ENCODE measurements at regions of chr1 and their contacts with region 1.

Region 1: DNA sequence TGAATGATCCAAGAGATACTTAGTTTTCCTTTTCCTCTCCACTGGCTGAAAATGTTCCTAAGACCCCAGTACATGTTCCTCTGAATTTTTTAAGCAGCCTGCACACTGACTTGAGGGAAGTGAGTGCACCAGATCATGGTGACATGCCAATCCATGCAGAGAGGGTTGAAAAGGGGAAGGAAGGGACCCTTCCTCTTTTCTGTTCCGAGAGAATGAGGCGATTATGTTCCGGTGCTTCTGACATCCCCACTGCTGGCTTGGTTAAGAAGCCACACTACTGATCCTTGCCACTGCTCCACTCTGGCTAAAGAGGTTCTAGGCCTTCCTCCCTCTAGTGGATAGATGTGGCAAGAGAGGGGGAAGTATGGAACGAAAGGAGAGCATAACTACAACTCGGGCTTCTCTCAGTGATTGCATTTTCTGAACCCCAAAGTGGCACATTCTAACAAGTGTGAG is 1.8 kb upstream of the CYB5R1 start:
- DNase-seq: peak; percentile 90
- ATAC-seq: peak; percentile 62
- H3K4me3 ChIP-seq: peak overlapping the region in 4 of 5 experiments; percentile 8 to 69 (median 50)
- H3K4me3 Mint-ChIP-seq: peak overlapping the region; percentile 97
- H3K27ac ChIP-seq: peak overlapping the region; percentile 73 to 75
- H3K27ac Mint-ChIP-seq: peak overlapping the region; percentile 95
- H3K4me1 ChIP-seq: peaks cover 28 to 38% of the 10 kb centered on the region in 2 donors
- H3K4me1 Mint-ChIP-seq: peaks cover 39% of the 10 kb centered on the region
- H3K27me3 ChIP-seq: no peaks in the 10 kb centered on the region
- H3K27me3 Mint-ChIP-seq: no peaks in the 10 kb centered on the region
- CTCF ChIP-seq: peak; percentile 74

Region 2: GRCh38 chr1:202810615-202811295 is 158.1 kb before region 1 on chr1 and contains the start of gene PCAT6:
- CTCF ChIA-PET with region 1: no interaction called
- POLR2A ChIA-PET with region 1: interaction called, 3 read pairs
- intact Hi-C with region 1: loop called (anchors 1 kb)
- DNase-seq: peak; percentile 93
- ATAC-seq: peak; percentile 81
- H3K4me3 ChIP-seq: peak within 1 kb of the TSS; percentile 72 to 91 (median 86)
- H3K4me3 Mint-ChIP-seq: peak within 1 kb of the TSS; percentile 87
- H3K27ac ChIP-seq: peak within 1 kb of the TSS; percentile 35 to 69
- H3K27ac Mint-ChIP-seq: peak within 1 kb of the TSS; percentile 91
- H3K4me1 ChIP-seq: peaks cover 23 to 33% of the 10 kb centered on the region in 2 donors
- H3K4me1 Mint-ChIP-seq: peaks cover 32% of the 10 kb centered on the region
- H3K27me3 ChIP-seq: peaks cover 0 to 15% (median 2%) of the 10 kb centered on the region in 4 experiments
- H3K27me3 Mint-ChIP-seq: peaks cover 6% of the 10 kb centered on the region
- CTCF ChIP-seq: no peak
- total RNA-seq, gene PCAT6: 1.6 TPM in 1 of 2 replicates, not detected in the other

Region 3: GRCh38 chr1:202871366-202871765 is 97.5 kb before region 1 on chr1:
- CTCF ChIA-PET with region 1: no interaction called
- POLR2A ChIA-PET with region 1: no interaction called
- intact Hi-C with region 1: no loop called
- DNase-seq: no peak
- ATAC-seq: no peak
- H3K4me3 ChIP-seq: no peak overlapping the region
- H3K4me3 Mint-ChIP-seq: no peak overlapping the region
- H3K27ac ChIP-seq: no peak overlapping the region
- H3K27ac Mint-ChIP-seq: no peak overlapping the region
- H3K4me1 ChIP-seq: no peaks in the 10 kb centered on the region
- H3K4me1 Mint-ChIP-seq: no peaks in the 10 kb centered on the region
- H3K27me3 ChIP-seq: peaks cover 0 to 2% (median 0%) of the 10 kb centered on the region in 4 experiments
- H3K27me3 Mint-ChIP-seq: peaks cover 3% of the 10 kb centered on the region
- CTCF ChIP-seq: no peak

Region 4: DNA sequence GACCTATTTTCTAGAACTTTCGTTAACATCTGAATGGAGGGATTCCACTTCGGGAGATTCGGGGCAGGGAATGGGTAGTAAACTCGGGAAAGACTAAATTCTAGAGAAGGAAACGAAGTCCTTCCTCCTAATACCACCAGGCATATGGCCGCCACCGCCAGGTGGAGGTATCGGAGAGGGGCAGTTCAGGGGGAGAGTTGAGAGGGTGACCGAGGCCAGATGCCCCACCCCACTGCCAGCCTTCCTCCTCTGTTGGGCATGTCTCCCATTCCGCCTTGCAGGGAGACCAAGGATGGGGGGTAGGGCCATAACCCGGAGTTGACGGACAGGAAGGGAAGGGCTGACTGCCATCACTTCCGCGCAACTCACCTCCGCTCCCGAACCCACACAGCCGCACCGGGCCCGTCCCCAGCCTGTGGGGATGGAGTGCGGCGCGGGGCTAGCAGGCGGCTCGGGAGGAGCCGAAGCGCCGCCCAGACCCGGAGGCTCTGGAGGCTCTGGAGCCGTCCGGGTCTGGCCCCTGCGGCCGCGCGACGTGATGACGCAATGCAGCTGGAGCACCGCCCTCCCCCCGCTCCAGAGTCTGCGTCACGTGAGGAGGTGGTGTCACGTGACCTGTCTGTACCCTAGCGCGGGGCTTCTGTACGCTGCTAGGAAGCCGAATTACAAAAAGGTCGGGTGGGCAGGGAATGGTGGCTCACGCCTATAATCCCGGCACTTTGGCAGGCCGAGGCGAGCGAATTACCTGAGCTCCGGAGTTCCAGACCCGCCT is 42.0 kb before region 1 on chr1 and contains the start of gene KLHL12:
- CTCF ChIA-PET with region 1: interaction called, 4 read pairs
- POLR2A ChIA-PET with region 1: no interaction called
- intact Hi-C with region 1: loop called (anchors 1 kb)
- DNase-seq: peak; percentile 97
- ATAC-seq: peak; percentile 94
- H3K4me3 ChIP-seq: peak within 1 kb of the TSS; percentile 92 to 99 (median 94)
- H3K4me3 Mint-ChIP-seq: peak within 1 kb of the TSS; percentile 94
- H3K27ac ChIP-seq: peak within 1 kb of the TSS; percentile 89 to 95
- H3K27ac Mint-ChIP-seq: peak within 1 kb of the TSS; percentile 97
- H3K4me1 ChIP-seq: peaks cover 9 to 14% of the 10 kb centered on the region in 2 donors
- H3K4me1 Mint-ChIP-seq: peaks cover 21% of the 10 kb centered on the region
- H3K27me3 ChIP-seq: no peaks in the 10 kb centered on the region
- H3K27me3 Mint-ChIP-seq: no peaks in the 10 kb centered on the region
- CTCF ChIP-seq: peak; percentile 81
- total RNA-seq, gene KLHL12: 25.5 and 26.1 TPM in 2 replicates

Region 5: GRCh38 chr1:202957733-202958543 is 10.9 kb before region 1 on chr1 and contains the start of gene ADIPOR1:
- CTCF ChIA-PET with region 1: interaction called, 5 read pairs
- POLR2A ChIA-PET with region 1: interaction called, 3 read pairs
- intact Hi-C with region 1: loop called (anchors 1 kb)
- DNase-seq: peak; percentile 92
- ATAC-seq: peak; percentile 98
- H3K4me3 ChIP-seq: peak within 1 kb of the TSS; percentile 79 to 93 (median 87)
- H3K4me3 Mint-ChIP-seq: peak within 1 kb of the TSS; percentile 90
- H3K27ac ChIP-seq: peak within 1 kb of the TSS; percentile 79 to 95
- H3K27ac Mint-ChIP-seq: peak within 1 kb of the TSS; percentile 86
- H3K4me1 ChIP-seq: peaks cover 25 to 27% of the 10 kb centered on the region in 2 donors
- H3K4me1 Mint-ChIP-seq: peaks cover 40% of the 10 kb centered on the region
- H3K27me3 ChIP-seq: no peaks in the 10 kb centered on the region
- H3K27me3 Mint-ChIP-seq: no peaks in the 10 kb centered on the region
- CTCF ChIP-seq: no peak
- total RNA-seq, gene ADIPOR1: 44.2 and 46.6 TPM in 2 replicates

Region 6: GRCh38 chr1:202998836-202999750 is 30.2 kb after region 1 on chr1:
- CTCF ChIA-PET with region 1: interaction called, 14 read pairs
- POLR2A ChIA-PET with region 1: no interaction called
- intact Hi-C with region 1: loop called (anchors 1 kb)
- DNase-seq: peak; percentile 82
- ATAC-seq: peak; percentile 45
- H3K4me3 ChIP-seq: peak overlapping the region in 3 of 5 experiments; percentile 32 to 40 (median 37)
- H3K4me3 Mint-ChIP-seq: peak overlapping the region; percentile 72
- H3K27ac ChIP-seq: peak overlapping the region; percentile 57 to 64
- H3K27ac Mint-ChIP-seq: peak overlapping the region; percentile 83
- H3K4me1 ChIP-seq: peaks cover 14 to 15% of the 10 kb centered on the region in 2 donors
- H3K4me1 Mint-ChIP-seq: peaks cover 16% of the 10 kb centered on the region
- H3K27me3 ChIP-seq: no peaks in the 10 kb centered on the region
- H3K27me3 Mint-ChIP-seq: peaks cover 4% of the 10 kb centered on the region
- CTCF ChIP-seq: peak; percentile 93

Region 7: GRCh38 chr1:203026031-203026989 is 57.4 kb after region 1 on chr1 and contains the start of gene PPFIA4:
- CTCF ChIA-PET with region 1: no interaction called
- POLR2A ChIA-PET with region 1: no interaction called
- intact Hi-C with region 1: loop called (anchors 5 kb)
- DNase-seq: peak; percentile 90
- ATAC-seq: peak; percentile 96
- H3K4me3 ChIP-seq: peak within 1 kb of the TSS; percentile 53 to 68 (median 65)
- H3K4me3 Mint-ChIP-seq: peak within 1 kb of the TSS; percentile 84
- H3K27ac ChIP-seq: peak within 1 kb of the TSS in 1 of 2 donors; percentile 48
- H3K27ac Mint-ChIP-seq: peak within 1 kb of the TSS; percentile 62
- H3K4me1 ChIP-seq: peaks cover 10 to 16% of the 10 kb centered on the region in 2 donors
- H3K4me1 Mint-ChIP-seq: peaks cover 16% of the 10 kb centered on the region
- H3K27me3 ChIP-seq: peaks cover 0 to 16% (median 5%) of the 10 kb centered on the region in 4 experiments
- H3K27me3 Mint-ChIP-seq: peaks cover 7% of the 10 kb centered on the region
- CTCF ChIP-seq: no peak
- total RNA-seq, gene PPFIA4: 0.62 and 0.75 TPM in 2 replicates